ENCODE measurements at regions of chr18 and their contacts with region 1.

Region 1: GRCh38 chr18:58661423-58661822 is 9.8 kb upstream of the MALT1 start:
- DNase-seq: no peak
- ATAC-seq: no peak
- H3K4me3 Mint-ChIP-seq: no peak overlapping the region
- H3K27ac Mint-ChIP-seq: no peak overlapping the region
- H3K4me1 Mint-ChIP-seq: peaks cover 22% of the 10 kb centered on the region
- H3K27me3 Mint-ChIP-seq: no peaks in the 10 kb centered on the region

Region 2: DNA sequence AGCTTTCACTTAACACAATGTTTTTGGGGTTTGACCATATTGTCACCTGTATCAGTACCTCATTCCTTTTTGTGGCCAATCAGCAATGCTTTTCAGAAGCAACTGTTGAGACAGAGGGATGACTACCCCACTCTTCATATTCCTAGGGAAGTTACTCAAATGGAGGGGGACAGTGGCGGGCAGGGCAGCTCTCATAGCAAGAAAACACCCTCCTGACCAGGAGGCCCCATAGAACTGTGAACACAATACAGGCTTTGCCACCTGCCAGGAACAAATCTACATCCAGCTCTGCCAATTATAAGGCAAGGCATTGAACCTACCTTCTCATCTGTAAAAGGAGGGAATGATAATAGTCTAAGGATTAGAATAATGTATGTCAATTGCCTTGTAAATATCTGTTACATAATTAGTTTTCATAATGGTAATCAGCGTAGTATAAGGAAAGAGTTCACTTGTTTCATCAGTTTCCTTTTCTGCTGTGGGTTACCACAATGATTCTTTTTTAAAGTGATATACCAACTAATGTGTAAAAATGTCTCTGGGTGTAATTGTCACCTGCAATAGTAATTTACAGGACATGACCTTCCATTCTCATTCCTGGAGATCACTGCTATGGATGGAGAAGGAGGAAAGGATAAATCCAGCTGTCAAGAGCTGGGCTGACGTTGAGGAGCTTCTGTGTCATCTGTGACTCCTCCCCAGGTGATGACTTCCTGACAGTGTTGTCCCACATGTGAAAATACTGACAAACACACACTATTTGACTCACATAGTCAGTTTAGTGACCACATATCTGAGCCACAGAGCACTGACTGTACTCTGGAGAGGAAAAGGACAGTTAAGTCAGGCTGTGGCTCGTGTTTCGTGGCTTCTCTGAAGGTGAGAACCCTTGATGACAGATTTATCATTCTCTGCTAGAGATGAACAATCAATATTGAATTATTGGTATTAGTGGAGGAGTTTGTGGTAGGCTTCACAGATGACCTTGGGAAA is 46.0 kb before region 1 on chr18:
- POLR2A ChIA-PET with region 1: interaction called, 21 read pairs
- DNase-seq: peak; percentile 43
- ATAC-seq: peak; percentile 99
- H3K4me3 Mint-ChIP-seq: peak overlapping the region; percentile 83
- H3K27ac Mint-ChIP-seq: peak overlapping the region; percentile 99
- H3K4me1 Mint-ChIP-seq: peaks cover 33% of the 10 kb centered on the region
- H3K27me3 Mint-ChIP-seq: no peaks in the 10 kb centered on the region

Measured in activated naive CD8-positive, alpha-beta T cell treated with anti-CD3 and anti-CD28 coated beads, Interleukin-2, amount 10 ng/mL, durations not matched to agents 7 days and 5 days (primary cell).